IMR-90 (cell line): ENCODE measurements at regions of chr3 and their contacts with region 1.

Region 1: DNA sequence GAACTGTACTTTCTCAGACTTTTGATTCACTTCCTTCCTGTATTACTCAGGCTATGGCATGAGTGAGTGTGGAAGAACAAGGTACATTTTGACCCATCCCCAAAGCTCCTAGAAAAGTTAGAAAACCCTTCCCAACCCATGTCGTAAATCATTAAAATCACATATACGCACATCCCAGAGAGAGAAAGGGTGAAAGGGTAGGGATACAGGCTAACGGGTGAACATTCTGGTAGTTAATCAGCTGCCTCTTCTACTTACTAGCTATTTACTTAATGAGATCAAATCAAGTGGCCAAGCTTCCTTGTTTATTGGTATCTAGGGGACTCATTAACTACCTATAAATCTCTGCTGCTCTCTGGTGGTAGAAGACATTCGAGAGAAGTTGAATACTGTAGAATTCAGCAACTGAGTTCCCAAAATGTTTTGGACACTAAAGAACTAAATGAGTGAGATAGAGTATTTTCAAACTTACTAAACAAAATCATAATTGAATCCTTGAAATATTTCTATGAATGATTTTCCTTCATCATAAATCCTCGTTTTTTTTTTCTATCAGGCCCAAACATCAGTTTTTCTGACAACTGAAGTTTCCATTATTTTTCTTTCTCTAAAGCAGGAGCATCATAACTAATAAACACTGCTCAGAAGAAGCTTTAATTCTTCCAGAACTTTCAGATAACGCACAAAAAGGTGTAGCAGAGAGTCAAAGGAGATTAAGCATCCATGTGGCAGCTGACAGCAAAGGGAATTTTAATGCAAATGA is 124.2 kb downstream of the IMPG2 start:
- DNase-seq: peak; percentile 72
- ATAC-seq: peak; percentile 71
- H3K4me3 ChIP-seq: no peak overlapping the region
- H3K27ac ChIP-seq: no peak overlapping the region
- H3K4me1 ChIP-seq: no peaks in the 10 kb centered on the region; the same call in 1 of the 2 replicates
- H3K27me3 ChIP-seq: 0 out of 2 replicates have a peak, but pooled peaks cover 1% of the 10 kb centered on the region
- CTCF ChIP-seq: peak; percentile 81
- POLR2A ChIP-seq: 0 out of 2 replicates have a peak, but pooled peaks have one; percentile 27
- RAD21 ChIP-seq: peak; percentile 87

Region 2: DNA sequence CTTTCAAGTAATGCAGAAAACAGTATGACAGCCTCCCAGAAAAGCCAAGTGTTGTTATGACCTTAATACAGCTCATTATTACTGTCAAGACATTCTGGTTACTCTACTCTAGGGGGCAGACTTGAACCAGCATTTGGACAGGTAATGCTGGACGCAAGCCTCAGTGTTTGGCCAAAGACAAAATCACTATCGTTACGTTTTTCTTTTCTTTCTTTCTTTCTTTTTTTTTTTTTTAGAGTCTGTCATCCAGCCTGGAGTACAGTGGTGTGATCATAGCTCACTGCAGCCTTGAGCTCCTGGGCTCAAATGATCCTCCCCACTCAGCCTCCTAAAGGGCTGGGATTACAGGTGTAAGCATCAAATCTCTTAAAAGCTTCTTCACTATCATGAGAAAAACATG is 733.1 kb before region 1 on chr3:
- CTCF ChIA-PET with region 1: interaction called, 4 read pairs
- POLR2A ChIA-PET with region 1: no interaction called
- dilution Hi-C with region 1: no loop called
- in situ Hi-C with region 1: no loop called
- intact Hi-C with region 1: loop called (anchors 1 kb)
- DNase-seq: peak; percentile 78
- ATAC-seq: peak; percentile 94
- H3K4me3 ChIP-seq: no peak overlapping the region
- H3K27ac ChIP-seq: no peak overlapping the region
- H3K4me1 ChIP-seq: no peaks in the 10 kb centered on the region; the same call in 1 of the 2 replicates
- H3K27me3 ChIP-seq: no peaks in the 10 kb centered on the region
- CTCF ChIP-seq: peak; percentile 92
- POLR2A ChIP-seq: 0 out of 2 replicates have a peak, but pooled peaks have one; percentile 27
- RAD21 ChIP-seq: peak; percentile 98

Region 3: DNA sequence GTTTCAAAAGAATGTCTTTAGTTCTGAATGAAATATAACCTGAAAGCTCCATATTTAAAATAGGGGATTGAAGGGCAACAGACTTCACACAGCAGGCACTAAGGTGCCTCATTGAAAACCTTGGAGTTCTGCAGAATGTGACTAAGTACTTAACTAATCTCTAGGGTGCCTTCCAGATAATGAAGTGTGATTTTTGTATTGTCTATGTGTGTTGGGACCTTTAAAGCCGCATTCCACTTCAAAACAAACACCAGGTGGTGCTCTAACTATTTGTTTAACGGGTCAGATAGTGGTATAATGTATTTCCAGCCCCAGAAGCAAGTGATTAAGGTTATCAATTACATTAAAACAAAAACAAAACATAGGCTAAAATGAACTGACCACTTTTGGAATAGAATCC is 458.8 kb before region 1 on chr3:
- CTCF ChIA-PET with region 1: interaction called, 4 read pairs
- POLR2A ChIA-PET with region 1: no interaction called
- dilution Hi-C with region 1: no loop called
- in situ Hi-C with region 1: loop called (anchors 10 kb)
- intact Hi-C with region 1: loop called (anchors 1 kb)
- DNase-seq: peak; percentile 15
- ATAC-seq: no peak; the same call in 1 of the 2 replicates
- H3K4me3 ChIP-seq: no peak overlapping the region
- H3K27ac ChIP-seq: no peak overlapping the region
- H3K4me1 ChIP-seq: 0 out of 2 replicates have a peak, but pooled peaks cover 1% of the 10 kb centered on the region
- H3K27me3 ChIP-seq: no peaks in the 10 kb centered on the region
- CTCF ChIP-seq: peak; percentile 39
- POLR2A ChIP-seq: no peak
- RAD21 ChIP-seq: peak; percentile 44

Region 4: GRCh38 chr3:100893590-100893989 is 302.5 kb before region 1 on chr3:
- CTCF ChIA-PET with region 1: interaction called, 30 read pairs
- POLR2A ChIA-PET with region 1: interaction called, 3 read pairs
- dilution Hi-C with region 1: no loop called
- in situ Hi-C with region 1: loop called (anchors 5 kb)
- intact Hi-C with region 1: loop called (anchors 1 kb)
- DNase-seq: peak; percentile 66
- ATAC-seq: peak; percentile 77
- H3K4me3 ChIP-seq: no peak overlapping the region
- H3K27ac ChIP-seq: no peak overlapping the region
- H3K4me1 ChIP-seq: no peaks in the 10 kb centered on the region
- H3K27me3 ChIP-seq: no peaks in the 10 kb centered on the region
- CTCF ChIP-seq: peak; percentile 81
- POLR2A ChIP-seq: peak; percentile 47; the same call in 1 of the 2 replicates
- RAD21 ChIP-seq: peak; percentile 96

Region 5: GRCh38 chr3:101069901-101070798 is 126.0 kb before region 1 on chr3:
- CTCF ChIA-PET with region 1: interaction called, 3 read pairs
- POLR2A ChIA-PET with region 1: no interaction called
- dilution Hi-C with region 1: no loop called
- in situ Hi-C with region 1: no loop called
- intact Hi-C with region 1: loop called (anchors 5 kb)
- DNase-seq: peak; percentile 22
- ATAC-seq: 0 out of 2 replicates have a peak, but pooled peaks have one; percentile 6
- H3K4me3 ChIP-seq: no peak overlapping the region
- H3K27ac ChIP-seq: 0 out of 2 replicates have a peak overlapping the region, but pooled peaks have one; percentile 5
- H3K4me1 ChIP-seq: peaks cover 15% of the 10 kb centered on the region
- H3K27me3 ChIP-seq: no peaks in the 10 kb centered on the region
- CTCF ChIP-seq: peak; percentile 39
- POLR2A ChIP-seq: no peak
- RAD21 ChIP-seq: peak; percentile 37